ENCODE measurements at regions of chr6 and their contacts with region 1.

Region 1: GRCh38 chr6:30489081-30490025 is at the start of gene HLA-E:
- DNase-seq: peak; percentile 91
- total RNA-seq, gene HLA-E: 116 and 118 TPM in 2 replicates

Region 2: GRCh38 chr6:30453508-30454116 is 35.7 kb before region 1 on chr6:
- in situ Hi-C with region 1: no loop called
- DNase-seq: peak; percentile 53

Region 3: GRCh38 chr6:30541515-30542403 is 52.4 kb after region 1 on chr6:
- in situ Hi-C with region 1: loop called (anchors 10 kb)
- DNase-seq: peak; percentile 88

Measured in G401 (cell line).